ENCODE measurements at regions of chr7 and their contacts with region 1.

Region 1: DNA sequence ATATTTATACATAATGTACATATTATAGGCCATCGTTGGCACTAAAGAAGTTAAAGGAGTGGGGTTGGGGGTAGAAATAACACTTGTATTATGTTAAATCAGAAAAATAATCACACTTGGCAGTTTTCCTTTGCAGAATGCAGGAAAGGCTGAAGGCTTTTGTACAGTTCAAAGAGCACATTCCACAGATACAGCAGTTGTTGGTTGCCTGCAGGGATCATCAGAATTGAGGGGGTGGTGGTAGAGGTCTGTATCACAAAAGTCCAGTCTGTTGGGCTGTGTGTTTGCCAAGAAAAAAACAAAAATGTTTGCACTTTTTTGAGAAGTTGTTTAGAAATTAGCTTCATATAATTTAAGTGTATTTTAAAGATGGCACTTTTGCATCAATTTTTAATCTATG is 231.8 kb upstream of the FOXP2 start:
- DNase-seq: no peak
- ATAC-seq: no peak
- H3K4me3 ChIP-seq: no peak overlapping the region
- H3K4me3 Mint-ChIP-seq: no peak overlapping the region
- H3K27ac ChIP-seq: no peak overlapping the region
- H3K27ac Mint-ChIP-seq: no peak overlapping the region
- H3K4me1 ChIP-seq: no peaks in the 10 kb centered on the region
- H3K4me1 Mint-ChIP-seq: no peaks in the 10 kb centered on the region
- H3K27me3 ChIP-seq: no peaks in the 10 kb centered on the region
- H3K27me3 Mint-ChIP-seq: no peaks in the 10 kb centered on the region

Region 2: DNA sequence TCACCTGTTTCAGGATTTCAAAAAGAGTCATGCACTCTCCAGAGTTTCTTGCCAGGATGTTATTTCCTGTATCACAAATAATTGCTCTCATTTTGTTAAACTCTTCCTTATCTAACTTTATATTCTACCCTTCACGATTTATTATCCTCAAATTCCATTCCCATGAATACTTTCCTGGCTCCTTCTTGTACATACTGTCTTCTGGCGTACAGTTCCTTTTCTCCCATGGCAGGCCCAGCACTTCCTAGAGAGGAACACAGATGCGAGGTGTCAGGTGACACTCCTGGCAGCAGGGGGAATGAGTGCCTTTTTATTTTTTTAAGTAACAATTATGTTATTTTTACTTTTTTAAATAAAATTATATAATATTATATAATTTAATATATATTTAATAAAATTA is 1435.8 kb after region 1 on chr7:
- CTCF ChIA-PET with region 1: no interaction called
- POLR2A ChIA-PET with region 1: interaction called in 1 of 2 experiments, 15 read pairs
- DNase-seq: no peak
- ATAC-seq: no peak
- H3K4me3 ChIP-seq: no peak overlapping the region
- H3K4me3 Mint-ChIP-seq: no peak overlapping the region
- H3K27ac ChIP-seq: no peak overlapping the region
- H3K27ac Mint-ChIP-seq: no peak overlapping the region
- H3K4me1 ChIP-seq: no peaks in the 10 kb centered on the region
- H3K4me1 Mint-ChIP-seq: no peaks in the 10 kb centered on the region
- H3K27me3 ChIP-seq: no peaks in the 10 kb centered on the region
- H3K27me3 Mint-ChIP-seq: no peaks in the 10 kb centered on the region